K562 (cell line): ENCODE measurements at regions of chr15 and their contacts with region 1.

Region 1: DNA sequence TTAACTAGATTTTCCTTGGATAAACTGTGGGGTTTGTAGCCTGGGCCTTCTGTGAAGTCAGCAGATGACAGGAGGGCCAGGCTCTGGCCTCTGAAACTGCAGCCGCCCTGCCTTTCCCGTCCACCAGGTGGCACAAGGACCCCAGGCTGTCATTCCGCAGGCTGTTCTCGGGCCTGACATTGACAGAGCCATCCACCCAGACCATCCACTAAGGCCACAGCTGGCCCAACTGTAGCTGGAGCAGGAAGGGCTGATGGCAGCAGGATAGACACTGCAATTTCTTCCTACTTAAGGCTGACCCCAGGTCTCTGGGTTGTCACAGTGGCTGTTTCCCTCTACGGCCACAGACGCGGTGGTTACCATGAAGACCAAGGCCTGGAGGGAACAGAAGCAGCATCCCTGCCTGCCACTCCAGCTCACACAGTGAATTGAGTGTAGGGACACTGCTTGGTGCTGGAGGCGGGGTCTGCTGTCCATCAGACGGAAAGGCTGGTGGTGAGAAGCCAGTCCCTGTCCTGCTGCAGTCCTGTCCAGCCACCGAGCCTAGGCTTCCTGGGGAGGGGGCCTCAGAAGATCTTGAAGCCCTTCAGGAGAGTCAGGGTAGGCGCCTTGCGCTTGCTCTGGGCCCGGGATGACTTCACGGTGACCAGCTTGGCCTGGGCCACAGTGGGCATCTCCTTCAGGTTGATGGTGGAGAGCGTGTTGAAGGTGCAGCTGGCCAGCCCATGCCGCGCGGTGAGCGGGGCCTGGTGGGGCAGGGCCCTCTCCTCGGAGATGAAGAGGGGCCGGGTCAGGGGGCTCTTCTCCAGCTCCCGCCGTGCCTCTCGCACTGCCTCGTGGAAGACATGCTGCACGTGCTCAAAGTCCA is 9.4 kb downstream of the SLC51B start:
- DNase-seq: peak; percentile 76 to 81 (median 80)
- ATAC-seq: peak; percentile 92
- H3K4me3 ChIP-seq: no peak overlapping the region
- H3K27ac ChIP-seq: no peak overlapping the region
- H3K4me1 ChIP-seq: peaks cover 5 to 11% of the 10 kb centered on the region in 2 experiments; a peak in 3 of 5 replicates
- H3K27me3 ChIP-seq: peaks cover 0 to 16% of the 10 kb centered on the region in 2 experiments; a peak in 3 of 5 replicates
- CTCF ChIP-seq: peak; percentile 93 to 94 (median 93)
- EP300 ChIP-seq: no peak
- POLR2A ChIP-seq: no peak
- RAD21 ChIP-seq: peak; percentile 72 to 93

Region 2: DNA sequence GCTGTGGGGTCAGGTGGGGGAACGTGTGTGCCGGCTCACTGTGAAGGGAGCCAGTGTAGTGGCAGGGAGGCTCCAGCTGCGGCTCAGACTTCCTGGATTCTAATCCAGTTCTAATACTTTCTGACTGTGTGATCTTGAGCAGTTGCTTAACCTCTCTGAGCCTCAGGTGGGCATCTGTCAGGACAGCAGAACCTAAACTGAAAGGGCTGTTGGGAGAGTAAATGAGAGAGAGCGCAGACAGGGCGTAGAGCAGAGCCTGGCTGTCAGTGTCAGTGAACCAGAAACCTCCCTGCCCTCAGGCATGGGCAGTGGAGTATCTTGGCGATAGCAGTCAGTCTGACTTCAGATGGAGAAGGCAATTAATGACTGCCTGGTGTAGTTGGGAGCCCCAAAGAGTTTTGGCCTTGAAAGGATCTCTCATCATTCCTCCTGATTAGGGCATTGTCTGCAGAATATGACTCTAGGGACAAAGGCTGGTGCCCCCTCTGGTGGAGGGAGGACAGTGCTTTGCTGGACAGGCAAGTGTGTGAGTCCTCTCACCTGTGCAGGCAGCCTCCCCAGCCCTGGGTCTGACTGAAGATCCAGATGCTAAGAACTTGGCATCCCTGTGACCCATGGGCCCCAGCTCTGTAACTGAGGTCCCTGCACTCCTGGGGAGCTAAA is 31.6 kb after region 1 on chr15:
- CTCF ChIA-PET with region 1: interaction called, 5 read pairs
- POLR2A ChIA-PET with region 1: no interaction called
- in situ Hi-C with region 1: no loop called
- intact Hi-C with region 1: loop called (anchors 1 kb)
- DNase-seq: peak; percentile 54 to 64 (median 58)
- ATAC-seq: peak; percentile 91
- H3K4me3 ChIP-seq: no peak overlapping the region
- H3K27ac ChIP-seq: no peak overlapping the region
- H3K4me1 ChIP-seq: peaks cover 0 to 4% of the 10 kb centered on the region in 2 experiments; a peak in 1 of 5 replicates
- H3K27me3 ChIP-seq: peaks cover 28 to 51% of the 10 kb centered on the region in 2 experiments
- CTCF ChIP-seq: peak; percentile 66 to 73 (median 73)
- EP300 ChIP-seq: no peak
- POLR2A ChIP-seq: no peak
- RAD21 ChIP-seq: peak in 1 of 2 experiments; percentile 53; a peak in 2 of 4 replicates

Region 3: GRCh38 chr15:65101411-65101890 is 46.9 kb after region 1 on chr15:
- CTCF ChIA-PET with region 1: interaction called, 6 read pairs
- POLR2A ChIA-PET with region 1: interaction called, 3 read pairs
- in situ Hi-C with region 1: no loop called
- intact Hi-C with region 1: loop called (anchors 1 kb)
- DNase-seq: peak; percentile 53 to 70 (median 65)
- ATAC-seq: peak; percentile 81
- H3K4me3 ChIP-seq: no peak overlapping the region
- H3K27ac ChIP-seq: no peak overlapping the region
- H3K4me1 ChIP-seq: no peaks in the 10 kb centered on the region
- H3K27me3 ChIP-seq: no peaks in the 10 kb centered on the region
- CTCF ChIP-seq: peak; percentile 76 to 85 (median 83)
- EP300 ChIP-seq: no peak
- POLR2A ChIP-seq: no peak
- RAD21 ChIP-seq: peak; percentile 29 to 60

Region 4: DNA sequence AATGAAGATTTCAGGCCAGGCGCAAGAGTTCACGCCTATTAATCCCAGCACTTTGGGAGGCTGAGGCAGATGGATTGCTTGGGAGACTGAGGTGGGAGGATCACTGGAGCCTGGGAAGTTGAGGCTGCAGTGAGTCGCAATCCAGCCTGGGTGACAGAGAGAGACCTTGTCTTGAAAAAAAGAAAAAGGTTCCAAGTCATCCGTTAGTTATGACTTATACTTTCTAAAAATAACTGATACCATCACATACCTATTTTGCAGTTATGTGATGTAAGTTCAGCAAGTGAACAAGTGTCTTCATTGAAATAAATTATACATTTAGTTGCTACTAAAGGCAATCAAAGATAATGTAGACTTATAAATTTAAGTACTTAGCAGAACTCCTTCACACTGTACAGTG is 108.5 kb after region 1 on chr15:
- CTCF ChIA-PET with region 1: no interaction called
- POLR2A ChIA-PET with region 1: no interaction called
- in situ Hi-C with region 1: no loop called
- intact Hi-C with region 1: no loop called
- DNase-seq: no peak
- ATAC-seq: no peak
- H3K4me3 ChIP-seq: no peak overlapping the region
- H3K27ac ChIP-seq: no peak overlapping the region
- H3K4me1 ChIP-seq: no peaks in the 10 kb centered on the region
- H3K27me3 ChIP-seq: no peaks in the 10 kb centered on the region
- CTCF ChIP-seq: no peak
- EP300 ChIP-seq: no peak
- POLR2A ChIP-seq: no peak
- RAD21 ChIP-seq: no peak

Region 5: GRCh38 chr15:65278401-65278882 is 223.9 kb after region 1 on chr15:
- CTCF ChIA-PET with region 1: no interaction called
- POLR2A ChIA-PET with region 1: no interaction called
- in situ Hi-C with region 1: no loop called
- intact Hi-C with region 1: no loop called
- DNase-seq: peak in 1 of 4 experiments; percentile 10
- ATAC-seq: no peak
- H3K4me3 ChIP-seq: no peak overlapping the region
- H3K27ac ChIP-seq: no peak overlapping the region
- H3K4me1 ChIP-seq: peaks cover 4 to 11% of the 10 kb centered on the region in 2 experiments; a peak in 4 of 5 replicates
- H3K27me3 ChIP-seq: no peaks in the 10 kb centered on the region
- CTCF ChIP-seq: no peak
- EP300 ChIP-seq: no peak
- POLR2A ChIP-seq: no peak
- RAD21 ChIP-seq: no peak

Region 6: GRCh38 chr15:65292938-65293518 is 238.5 kb after region 1 on chr15:
- CTCF ChIA-PET with region 1: no interaction called
- POLR2A ChIA-PET with region 1: no interaction called
- in situ Hi-C with region 1: loop called (anchors 10 kb)
- intact Hi-C with region 1: no loop called
- DNase-seq: no peak
- ATAC-seq: no peak
- H3K4me3 ChIP-seq: no peak overlapping the region
- H3K27ac ChIP-seq: no peak overlapping the region
- H3K4me1 ChIP-seq: peaks cover 7 to 15% of the 10 kb centered on the region in 2 experiments; a peak in 4 of 5 replicates
- H3K27me3 ChIP-seq: no peaks in the 10 kb centered on the region
- CTCF ChIP-seq: no peak
- EP300 ChIP-seq: no peak
- POLR2A ChIP-seq: no peak
- RAD21 ChIP-seq: no peak

Region 7: DNA sequence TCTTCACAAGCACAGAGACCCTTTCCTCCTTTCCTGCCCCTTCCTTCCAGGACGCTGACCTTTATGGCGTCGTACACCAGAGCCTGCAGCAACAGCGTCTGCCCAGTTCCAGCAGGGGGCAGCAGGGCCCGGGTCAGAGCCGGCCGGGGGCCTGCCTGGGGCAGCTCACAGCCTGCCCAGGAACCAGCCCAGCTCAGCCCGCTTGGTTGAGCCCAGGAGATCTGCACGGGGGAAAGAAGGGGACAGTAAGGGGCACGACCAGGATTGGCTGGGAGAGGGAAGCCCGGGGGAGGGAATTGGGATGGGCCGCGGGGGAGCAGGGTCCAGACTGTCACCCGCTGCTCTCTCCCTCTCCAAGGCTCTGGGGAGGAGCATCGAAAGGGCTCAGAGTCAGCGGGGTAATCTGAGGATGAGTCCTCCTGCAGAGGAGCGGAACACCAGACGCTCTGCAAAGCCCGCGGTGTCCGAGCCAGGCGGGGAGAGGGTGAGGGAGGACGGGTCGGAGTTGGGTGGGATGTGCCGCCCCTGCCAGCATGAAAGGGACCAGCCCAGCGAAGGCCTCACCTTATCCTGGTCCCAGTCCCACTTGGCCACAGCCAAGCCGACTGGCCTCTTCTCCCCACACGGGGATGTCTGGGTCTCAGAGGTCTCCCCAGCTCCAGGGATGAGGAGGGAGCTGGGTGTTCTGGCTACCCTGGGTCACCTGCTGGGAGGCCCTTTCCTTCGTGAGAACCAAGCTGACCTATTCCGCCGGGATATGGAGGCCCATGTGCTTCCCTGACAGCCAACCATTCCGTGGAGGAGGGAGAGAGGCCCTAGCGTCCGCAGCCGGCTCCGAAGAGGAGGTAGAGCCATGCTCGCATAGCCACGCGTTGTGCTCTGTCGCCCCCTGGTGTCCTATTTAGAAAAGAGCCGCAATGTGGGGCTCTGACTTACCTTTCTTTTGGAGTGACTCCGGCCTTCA is 330.6 kb after region 1 on chr15:
- CTCF ChIA-PET with region 1: interaction called, 11 read pairs
- POLR2A ChIA-PET with region 1: no interaction called
- in situ Hi-C with region 1: loop called (anchors 10 kb)
- intact Hi-C with region 1: no loop called
- DNase-seq: peak; percentile 88 to 91 (median 90)
- ATAC-seq: peak; percentile 96
- H3K4me3 ChIP-seq: peak overlapping the region; percentile 20; the same call in 1 of the 2 replicates
- H3K27ac ChIP-seq: no peak overlapping the region
- H3K4me1 ChIP-seq: peaks cover 6 to 15% of the 10 kb centered on the region in 2 experiments; a peak in 4 of 5 replicates
- H3K27me3 ChIP-seq: peaks cover 48 to 66% of the 10 kb centered on the region in 2 experiments; a peak in 4 of 5 replicates
- CTCF ChIP-seq: peak; percentile 93 to 97 (median 96)
- EP300 ChIP-seq: no peak
- POLR2A ChIP-seq: no peak
- RAD21 ChIP-seq: peak; percentile 86 to 96

Region 8: GRCh38 chr15:65460741-65461347 is 406.3 kb after region 1 on chr15:
- CTCF ChIA-PET with region 1: no interaction called
- POLR2A ChIA-PET with region 1: no interaction called
- in situ Hi-C with region 1: no loop called
- intact Hi-C with region 1: no loop called
- DNase-seq: no peak
- ATAC-seq: no peak
- H3K4me3 ChIP-seq: no peak overlapping the region
- H3K27ac ChIP-seq: no peak overlapping the region
- H3K4me1 ChIP-seq: no peaks in the 10 kb centered on the region
- H3K27me3 ChIP-seq: no peaks in the 10 kb centered on the region
- CTCF ChIP-seq: no peak
- EP300 ChIP-seq: no peak
- POLR2A ChIP-seq: no peak
- RAD21 ChIP-seq: no peak